Activated naive CD4-positive, alpha-beta T cell treated with anti-CD3 and anti-CD28 coated beads for 36 hours (primary cell): ENCODE measurements at regions of chr2 and their contacts with region 1.

Region 1: GRCh38 chr2:73293534-73294171 is at the start of gene EGR4:
- DNase-seq: peak; percentile 94
- H3K4me3 Mint-ChIP-seq: peak within 1 kb of the TSS; percentile 73
- H3K27ac Mint-ChIP-seq: no peak within 1 kb of the TSS
- H3K4me1 Mint-ChIP-seq: peaks cover 14% of the 10 kb centered on the region
- H3K27me3 Mint-ChIP-seq: peaks cover 65% of the 10 kb centered on the region
- total RNA-seq, gene EGR4: 0.07 to 0.12 TPM

Region 2: GRCh38 chr2:73112913-73113633 is 180.6 kb before region 1 on chr2 and contains the start of gene RAB11FIP5:
- CTCF ChIA-PET with region 1: no interaction called
- intact Hi-C with region 1: loop called (anchors 5 kb)
- DNase-seq: peak; percentile 78
- H3K4me3 Mint-ChIP-seq: peak within 1 kb of the TSS; percentile 81
- H3K27ac Mint-ChIP-seq: no peak within 1 kb of the TSS
- H3K4me1 Mint-ChIP-seq: peaks cover 21% of the 10 kb centered on the region
- H3K27me3 Mint-ChIP-seq: no peaks in the 10 kb centered on the region
- total RNA-seq, gene RAB11FIP5: 7.3 to 7.4 TPM

Region 3: GRCh38 chr2:73243884-73244570 is 49.6 kb before region 1 on chr2:
- CTCF ChIA-PET with region 1: interaction called, 10 read pairs
- intact Hi-C with region 1: no loop called
- DNase-seq: no peak
- H3K4me3 Mint-ChIP-seq: no peak overlapping the region
- H3K27ac Mint-ChIP-seq: peak overlapping the region; percentile 71
- H3K4me1 Mint-ChIP-seq: peaks cover 31% of the 10 kb centered on the region
- H3K27me3 Mint-ChIP-seq: no peaks in the 10 kb centered on the region

Region 4: DNA sequence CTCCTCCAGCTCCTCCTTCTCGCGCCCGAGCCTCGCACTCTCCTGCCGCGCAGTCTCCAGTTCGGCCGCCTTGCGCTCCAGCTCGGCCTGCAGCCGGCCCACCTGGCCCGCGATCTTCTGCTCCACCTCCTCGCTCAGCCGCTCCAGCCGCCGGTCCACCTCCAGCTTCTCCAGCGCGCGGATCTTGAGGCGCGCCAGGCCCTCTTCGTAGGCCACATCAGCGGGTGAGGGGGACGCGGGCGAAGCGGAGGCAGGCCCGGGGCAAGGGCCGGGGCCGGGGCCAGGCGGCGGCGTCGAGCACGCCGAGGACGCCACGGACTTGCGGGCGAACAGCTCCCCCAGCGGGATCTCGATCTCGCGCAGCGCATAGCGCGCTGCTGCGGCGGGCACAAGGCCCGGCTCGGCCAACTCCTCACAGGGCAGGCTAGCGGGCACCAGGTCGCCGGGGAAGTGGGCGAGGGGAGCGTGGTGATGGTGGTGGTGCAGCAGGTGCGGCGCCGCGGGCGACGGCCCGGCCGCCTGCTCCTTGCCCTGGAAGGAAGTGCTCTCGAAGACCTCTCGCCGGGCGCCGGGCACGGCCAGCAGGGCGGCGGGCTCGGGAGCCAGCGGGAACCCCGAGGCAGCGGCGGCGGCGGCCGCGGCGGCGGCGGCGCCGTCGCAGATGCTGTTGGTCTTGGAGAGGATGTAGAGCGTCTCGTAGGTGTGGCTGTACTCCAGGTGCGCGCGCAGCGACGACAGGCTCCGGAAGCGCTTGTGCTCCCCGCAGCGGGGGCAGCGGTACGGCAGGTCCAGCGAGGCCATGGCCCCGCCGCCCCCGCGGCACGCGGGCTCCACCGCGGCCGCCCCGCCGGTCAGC is 24.6 kb before region 1 on chr2:
- CTCF ChIA-PET with region 1: interaction called, 15 read pairs
- intact Hi-C with region 1: loop called (anchors 2 kb)
- DNase-seq: peak; percentile 79
- H3K4me3 Mint-ChIP-seq: peak overlapping the region; percentile 17
- H3K27ac Mint-ChIP-seq: no peak overlapping the region
- H3K4me1 Mint-ChIP-seq: peaks cover 13% of the 10 kb centered on the region
- H3K27me3 Mint-ChIP-seq: no peaks in the 10 kb centered on the region

Region 5: DNA sequence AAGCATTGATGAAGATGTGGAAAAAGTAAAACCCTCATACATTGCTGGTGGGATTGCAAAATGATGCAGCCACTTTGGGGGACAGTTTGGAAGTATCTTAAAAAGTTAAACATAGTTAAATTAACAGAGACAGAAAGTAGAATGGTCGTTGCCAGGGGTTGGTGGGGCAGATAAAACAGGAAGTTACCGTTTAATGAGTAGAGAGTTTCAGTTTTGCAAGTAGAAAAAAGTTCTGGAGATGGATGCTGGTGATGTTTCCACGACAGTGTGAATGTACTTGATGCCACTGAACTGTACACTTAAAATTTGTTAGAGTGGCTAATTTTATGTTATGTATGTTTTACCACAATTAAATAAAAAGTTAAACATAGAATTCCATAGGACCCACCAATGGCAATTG is 44.2 kb after region 1 on chr2:
- CTCF ChIA-PET with region 1: no interaction called
- intact Hi-C with region 1: no loop called
- DNase-seq: no peak
- H3K4me3 Mint-ChIP-seq: no peak overlapping the region
- H3K27ac Mint-ChIP-seq: no peak overlapping the region
- H3K4me1 Mint-ChIP-seq: no peaks in the 10 kb centered on the region
- H3K27me3 Mint-ChIP-seq: no peaks in the 10 kb centered on the region

Region 6: GRCh38 chr2:73614105-73614504 is 320.5 kb after region 1 on chr2:
- CTCF ChIA-PET with region 1: no interaction called
- intact Hi-C with region 1: loop called (anchors 2 kb)
- DNase-seq: peak; percentile 58
- H3K4me3 Mint-ChIP-seq: no peak overlapping the region
- H3K27ac Mint-ChIP-seq: no peak overlapping the region
- H3K4me1 Mint-ChIP-seq: peaks cover 11% of the 10 kb centered on the region
- H3K27me3 Mint-ChIP-seq: no peaks in the 10 kb centered on the region